Panc1 (cell line): ENCODE measurements at regions of chr1 and their contacts with region 1.

Region 1: GRCh38 chr1:156259805-156260204 is 11.9 kb upstream of the PAQR6 start:
- DNase-seq: no peak
- ATAC-seq: no peak
- H3K4me3 ChIP-seq: no peak overlapping the region
- H3K27ac ChIP-seq: no peak overlapping the region
- H3K4me1 ChIP-seq: peaks cover 10% of the 10 kb centered on the region
- H3K27me3 ChIP-seq: no peaks in the 10 kb centered on the region
- CTCF ChIP-seq: no peak

Region 2: DNA sequence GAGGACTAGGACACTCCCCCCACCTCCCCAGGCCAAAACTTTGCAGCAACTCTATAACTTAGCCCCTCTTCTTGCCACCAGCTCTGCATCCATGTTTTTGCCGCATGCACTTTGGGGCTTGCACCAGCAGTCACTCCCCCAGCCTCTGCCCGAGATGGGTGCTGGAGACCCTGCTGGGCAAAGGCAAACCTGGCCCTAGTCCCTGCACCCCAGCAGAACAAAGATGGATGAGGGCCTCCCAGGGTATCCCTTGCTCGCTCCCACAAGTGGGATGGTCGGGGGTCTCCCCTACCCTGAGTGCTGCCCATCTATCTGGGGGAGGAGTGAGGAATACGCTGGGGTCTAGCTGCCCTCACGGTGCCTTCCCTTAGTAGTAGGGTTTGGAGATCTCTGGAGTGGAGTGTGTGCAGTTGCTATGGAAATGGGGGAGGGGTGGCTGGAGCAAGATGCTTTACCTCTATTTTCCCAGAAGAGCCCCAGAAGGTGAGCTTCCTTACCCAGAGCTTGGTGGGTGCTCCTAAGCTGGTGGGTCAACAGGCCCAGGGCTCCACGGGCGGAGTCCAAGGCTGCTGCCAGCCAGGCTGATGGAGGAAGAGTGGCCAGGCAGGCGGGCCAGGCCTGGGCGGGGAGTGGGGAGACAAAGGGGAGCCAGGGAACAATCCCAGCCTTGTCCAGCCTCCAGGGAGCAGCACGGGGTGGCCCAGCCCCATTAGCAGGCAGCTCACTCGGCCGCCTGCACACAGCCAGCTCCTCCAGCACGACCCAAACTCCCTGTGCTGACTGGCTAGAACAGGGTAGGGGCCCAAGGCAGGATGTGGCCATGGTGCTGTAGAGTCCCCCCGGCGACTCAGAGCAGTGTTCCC is 12.1 kb before region 1 on chr1 and contains the start of gene PAQR6:
- CTCF ChIA-PET with region 1: interaction called, 15 read pairs
- POLR2A ChIA-PET with region 1: no interaction called
- in situ Hi-C with region 1: no loop called
- intact Hi-C with region 1: no loop called
- DNase-seq: no peak
- ATAC-seq: peak; percentile 46
- H3K4me3 ChIP-seq: no peak within 1 kb of the TSS
- H3K27ac ChIP-seq: no peak within 1 kb of the TSS
- H3K4me1 ChIP-seq: peaks cover 9% of the 10 kb centered on the region
- H3K27me3 ChIP-seq: no peaks in the 10 kb centered on the region
- CTCF ChIP-seq: no peak
- total RNA-seq, gene PAQR6: 0.92 TPM

Region 3: GRCh38 chr1:157415661-157416060 is 1155.9 kb after region 1 on chr1:
- CTCF ChIA-PET with region 1: no interaction called
- POLR2A ChIA-PET with region 1: no interaction called
- in situ Hi-C with region 1: no loop called
- intact Hi-C with region 1: no loop called
- DNase-seq: no peak
- ATAC-seq: no peak
- H3K4me3 ChIP-seq: no peak overlapping the region
- H3K27ac ChIP-seq: no peak overlapping the region
- H3K4me1 ChIP-seq: no peaks in the 10 kb centered on the region
- H3K27me3 ChIP-seq: peaks cover 5% of the 10 kb centered on the region; the same call in 1 of the 2 replicates
- CTCF ChIP-seq: no peak